ENCODE measurements at regions of chr3 and their contacts with region 1.

Region 1: GRCh38 chr3:150703299-150704134 is at the start of gene ERICH6:
- DNase-seq: peak; percentile 54 to 90 (median 69)
- ATAC-seq: peak; percentile 71
- H3K4me3 ChIP-seq: peak within 1 kb of the TSS; percentile 90
- H3K4me3 Mint-ChIP-seq: peak within 1 kb of the TSS; percentile 99
- H3K27ac ChIP-seq: peak within 1 kb of the TSS; percentile 77 to 89
- H3K27ac Mint-ChIP-seq: peak within 1 kb of the TSS; percentile 99
- H3K4me1 ChIP-seq: peaks cover 17% of the 10 kb centered on the region
- H3K4me1 Mint-ChIP-seq: peaks cover 26% of the 10 kb centered on the region
- H3K27me3 ChIP-seq: no peaks in the 10 kb centered on the region
- H3K27me3 Mint-ChIP-seq: no peaks in the 10 kb centered on the region
- CTCF ChIP-seq: no peak
- total RNA-seq, gene ERICH6: not detected

Region 2: DNA sequence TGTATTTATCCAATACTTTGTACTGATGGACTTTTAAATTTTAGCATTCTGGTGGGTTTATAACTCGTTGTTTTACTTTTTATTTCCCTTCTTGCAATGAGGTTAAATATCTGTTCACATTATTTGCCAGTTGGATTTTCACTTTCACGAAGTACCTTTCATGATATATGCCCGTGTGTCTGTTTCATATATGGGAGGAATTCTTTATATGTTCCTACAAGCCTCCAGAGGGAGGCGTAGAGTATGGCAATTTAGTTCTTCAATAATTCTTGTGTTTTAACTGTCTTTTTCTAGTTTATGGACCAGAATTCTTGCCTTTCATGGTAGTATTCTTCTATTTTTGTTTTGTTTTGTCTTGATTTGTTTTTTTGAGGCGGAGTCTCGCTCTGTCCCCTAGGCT is 777.7 kb before region 1 on chr3:
- CTCF ChIA-PET with region 1: no interaction called
- POLR2A ChIA-PET with region 1: no interaction called
- intact Hi-C with region 1: no loop called
- DNase-seq: no peak
- ATAC-seq: no peak
- H3K4me3 ChIP-seq: no peak overlapping the region
- H3K4me3 Mint-ChIP-seq: no peak overlapping the region
- H3K27ac ChIP-seq: no peak overlapping the region
- H3K27ac Mint-ChIP-seq: no peak overlapping the region
- H3K4me1 ChIP-seq: no peaks in the 10 kb centered on the region
- H3K4me1 Mint-ChIP-seq: no peaks in the 10 kb centered on the region
- H3K27me3 ChIP-seq: no peaks in the 10 kb centered on the region
- H3K27me3 Mint-ChIP-seq: no peaks in the 10 kb centered on the region
- CTCF ChIP-seq: no peak

Region 3: DNA sequence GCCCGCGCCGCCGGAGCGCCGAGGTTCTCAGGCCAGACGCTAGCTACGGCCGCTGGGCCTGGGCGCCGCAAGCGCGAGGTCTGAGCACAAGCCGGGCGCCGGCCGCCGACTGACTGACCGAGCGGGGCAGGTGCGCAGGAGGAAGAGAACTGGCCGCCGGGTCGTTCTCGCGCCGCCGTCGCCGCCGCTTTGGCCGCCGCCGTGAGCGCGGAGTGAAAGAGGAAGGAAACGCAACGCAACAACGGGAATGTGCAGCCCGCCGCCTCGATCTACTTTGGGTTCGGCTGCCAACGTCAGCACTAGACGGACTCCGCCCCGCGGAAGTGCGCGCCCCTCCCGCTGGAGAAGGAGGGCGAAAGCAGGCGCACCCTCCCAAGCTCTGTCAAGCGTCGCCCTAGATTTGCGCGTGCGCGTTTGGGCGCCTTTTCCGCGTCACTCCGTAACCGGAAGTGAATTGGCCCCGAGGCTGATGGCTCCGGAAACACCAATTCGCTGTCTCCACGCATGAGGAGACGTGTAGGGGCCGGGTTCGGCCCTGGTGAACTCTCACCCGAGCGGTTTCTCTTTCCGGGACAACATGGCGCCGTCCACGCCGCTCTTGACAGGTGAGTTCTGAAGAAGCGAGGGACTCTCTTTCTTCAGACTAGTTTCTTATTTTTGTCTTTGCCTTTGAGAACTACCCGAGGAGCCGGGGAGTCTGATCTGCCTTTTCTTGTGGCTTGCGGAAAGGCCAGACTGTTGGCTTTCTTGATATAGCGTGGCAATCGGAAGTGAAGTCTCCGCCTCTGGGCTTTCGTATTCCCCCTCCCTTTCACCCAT is 157.1 kb before region 1 on chr3 and contains the starts of genes EIF2A and SERP1:
- CTCF ChIA-PET with region 1: no interaction called
- POLR2A ChIA-PET with region 1: interaction called, 24 read pairs
- intact Hi-C with region 1: loop called (anchors 5 to 10 kb)
- DNase-seq: peak; percentile 98 to 100 (median 99)
- ATAC-seq: peak; percentile 88
- H3K4me3 ChIP-seq: peak within 1 kb of the TSS; percentile 86
- H3K4me3 Mint-ChIP-seq: peak within 1 kb of the TSS; percentile 91
- H3K27ac ChIP-seq: peak within 1 kb of the TSS; percentile 98 to 99
- H3K27ac Mint-ChIP-seq: peak within 1 kb of the TSS; percentile 93
- H3K4me1 ChIP-seq: peaks cover 19% of the 10 kb centered on the region
- H3K4me1 Mint-ChIP-seq: peaks cover 73% of the 10 kb centered on the region
- H3K27me3 ChIP-seq: no peaks in the 10 kb centered on the region
- H3K27me3 Mint-ChIP-seq: no peaks in the 10 kb centered on the region
- CTCF ChIP-seq: no peak
- total RNA-seq, gene EIF2A: 115 to 122 TPM
- total RNA-seq, gene SERP1: 141 to 147 TPM

Measured in CD4-positive, alpha-beta T cell (primary cell).